CD4-positive, alpha-beta memory T cell (primary cell): ENCODE measurements at regions of chr11 and their contacts with region 1.

Region 1: GRCh38 chr11:95835768-95836488 is 45.6 kb downstream of the CEP57 start:
- DNase-seq: peak; percentile 55 to 64 (median 55)
- H3K4me3 ChIP-seq: no peak overlapping the region
- H3K4me3 Mint-ChIP-seq: no peak overlapping the region
- H3K27ac ChIP-seq: no peak overlapping the region
- H3K27ac Mint-ChIP-seq: peak overlapping the region in 4 of 7 donors; percentile 1 to 75 (median 51)
- H3K4me1 ChIP-seq: no peaks in the 10 kb centered on the region
- H3K4me1 Mint-ChIP-seq: peaks cover 0 to 3% (median 1%) of the 10 kb centered on the region in 4 donors
- H3K27me3 ChIP-seq: no peaks in the 10 kb centered on the region
- H3K27me3 Mint-ChIP-seq: no peaks in the 10 kb centered on the region

Region 2: DNA sequence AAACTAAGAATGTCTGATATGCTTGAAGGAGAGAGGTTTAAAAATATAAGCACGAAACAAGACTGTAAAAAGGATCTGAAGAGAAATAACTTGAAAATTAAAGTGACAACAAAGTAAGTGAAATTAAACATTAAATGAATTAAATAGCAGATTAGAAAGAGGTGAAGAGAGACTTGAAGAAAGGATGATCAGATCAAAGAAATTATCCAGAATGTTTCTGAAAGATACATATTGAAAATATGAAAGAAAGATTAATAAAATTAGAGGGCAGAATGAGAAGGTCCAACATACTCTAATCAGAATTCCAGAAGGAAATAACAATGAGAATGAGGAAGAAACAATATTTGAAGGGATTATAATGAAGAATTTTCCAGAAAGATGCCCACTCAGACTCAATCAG is 197.4 kb before region 1 on chr11:
- CTCF ChIA-PET with region 1: no interaction called
- POLR2A ChIA-PET with region 1: no interaction called
- intact Hi-C with region 1: no loop called
- DNase-seq: no peak
- H3K4me3 ChIP-seq: no peak overlapping the region
- H3K4me3 Mint-ChIP-seq: no peak overlapping the region
- H3K27ac ChIP-seq: no peak overlapping the region
- H3K27ac Mint-ChIP-seq: no peak overlapping the region
- H3K4me1 ChIP-seq: peaks cover 17% of the 10 kb centered on the region
- H3K4me1 Mint-ChIP-seq: peaks cover 9 to 21% (median 15%) of the 10 kb centered on the region in 4 donors
- H3K27me3 ChIP-seq: no peaks in the 10 kb centered on the region
- H3K27me3 Mint-ChIP-seq: no peaks in the 10 kb centered on the region

Region 3: DNA sequence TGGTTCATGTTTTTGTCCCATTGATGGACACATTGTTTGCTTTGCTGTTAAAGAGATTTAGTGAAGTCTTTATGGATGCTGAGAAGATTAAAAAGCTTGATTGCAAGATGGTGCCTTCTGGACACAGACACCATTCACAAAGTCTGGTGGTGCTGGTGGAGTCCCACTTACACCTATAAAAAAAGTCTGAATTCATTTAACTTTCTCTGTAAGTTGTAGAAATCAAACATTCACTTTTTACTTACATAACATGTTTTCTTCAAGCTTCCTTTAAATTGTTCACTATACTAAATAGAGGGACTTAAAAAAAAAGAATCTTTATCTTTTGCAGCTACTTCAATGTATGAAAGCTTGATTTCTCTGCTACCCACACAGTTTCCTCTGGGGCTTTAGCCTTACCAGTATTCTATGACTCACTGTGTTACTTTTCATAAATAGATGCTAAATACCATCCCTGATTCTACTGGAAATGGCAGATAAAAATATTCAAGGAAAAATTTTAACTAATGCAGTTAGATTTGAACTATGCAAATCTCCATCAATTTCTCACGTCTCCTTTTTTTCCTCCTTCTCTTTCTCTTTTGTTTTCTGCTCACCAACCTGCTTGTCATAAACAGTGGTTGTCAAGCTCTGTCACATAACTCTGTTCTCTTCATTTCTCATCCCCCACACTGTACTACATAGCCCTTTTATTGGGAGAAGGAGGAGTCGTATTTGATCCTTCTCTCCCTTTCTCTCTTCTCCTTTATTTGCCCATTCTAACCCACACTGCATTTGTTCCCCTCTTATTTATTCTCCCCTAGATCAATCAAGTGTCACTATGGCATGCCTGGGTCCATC is 136.1 kb before region 1 on chr11:
- CTCF ChIA-PET with region 1: no interaction called
- POLR2A ChIA-PET with region 1: no interaction called
- intact Hi-C with region 1: no loop called
- DNase-seq: peak; percentile 39 to 52 (median 43)
- H3K4me3 ChIP-seq: peak overlapping the region; percentile 3 to 33
- H3K4me3 Mint-ChIP-seq: peak overlapping the region; percentile 72 to 88 (median 82)
- H3K27ac ChIP-seq: peak overlapping the region; percentile 65
- H3K27ac Mint-ChIP-seq: peak overlapping the region; percentile 90 to 97 (median 96)
- H3K4me1 ChIP-seq: peaks cover 80% of the 10 kb centered on the region
- H3K4me1 Mint-ChIP-seq: peaks cover 38 to 60% (median 54%) of the 10 kb centered on the region in 4 donors
- H3K27me3 ChIP-seq: no peaks in the 10 kb centered on the region
- H3K27me3 Mint-ChIP-seq: no peaks in the 10 kb centered on the region

Region 4: DNA sequence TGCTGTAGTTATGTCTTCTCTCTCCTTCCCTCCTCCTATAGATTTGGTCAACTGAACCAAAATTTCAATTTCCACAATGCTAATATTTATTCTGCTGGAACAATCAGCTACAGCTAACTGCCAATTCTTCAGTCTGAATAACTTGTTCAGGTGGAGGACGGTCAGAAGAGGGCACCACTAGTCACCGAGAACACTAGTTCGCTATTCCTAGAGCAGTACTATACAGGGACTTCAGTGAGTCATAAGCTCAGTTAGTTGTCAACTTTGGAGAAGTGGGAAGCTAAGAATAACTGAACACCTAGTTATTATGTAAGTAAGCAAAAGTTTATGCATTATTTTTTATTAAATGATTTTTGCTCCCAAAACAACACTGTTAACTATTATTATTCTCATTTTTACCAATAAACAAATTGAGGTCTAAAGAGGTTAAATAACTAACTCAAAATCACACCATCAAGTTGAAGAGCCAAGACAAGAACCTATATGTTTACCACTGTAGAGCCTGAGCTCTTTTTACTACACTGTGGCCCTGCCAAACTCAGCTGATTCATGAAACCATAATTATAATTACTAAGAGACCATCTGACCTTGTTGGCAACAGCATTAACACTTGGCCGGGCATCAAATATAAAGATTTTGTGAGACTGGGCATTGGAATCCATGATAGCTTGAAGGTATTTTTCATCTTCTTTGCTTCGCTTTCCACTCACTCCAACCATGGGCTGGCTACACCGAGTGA is 13.3 kb after region 1 on chr11:
- CTCF ChIA-PET with region 1: interaction called, 41 read pairs
- POLR2A ChIA-PET with region 1: interaction called, 4 read pairs
- intact Hi-C with region 1: no loop called
- DNase-seq: peak in 1 of 5 donors; percentile 16
- H3K4me3 ChIP-seq: no peak overlapping the region
- H3K4me3 Mint-ChIP-seq: no peak overlapping the region
- H3K27ac ChIP-seq: no peak overlapping the region
- H3K27ac Mint-ChIP-seq: peak overlapping the region in 1 of 7 donors; percentile 67
- H3K4me1 ChIP-seq: no peaks in the 10 kb centered on the region
- H3K4me1 Mint-ChIP-seq: no peaks in the 10 kb centered on the region
- H3K27me3 ChIP-seq: no peaks in the 10 kb centered on the region
- H3K27me3 Mint-ChIP-seq: no peaks in the 10 kb centered on the region

Region 5: GRCh38 chr11:96242971-96243647 is 407.2 kb after region 1 on chr11:
- CTCF ChIA-PET with region 1: no interaction called
- POLR2A ChIA-PET with region 1: no interaction called
- intact Hi-C with region 1: loop called (anchors 10 kb)
- DNase-seq: peak; percentile 65 to 89 (median 68)
- H3K4me3 ChIP-seq: peak overlapping the region; percentile 33 to 57
- H3K4me3 Mint-ChIP-seq: peak overlapping the region; percentile 85 to 93 (median 90)
- H3K27ac ChIP-seq: peak overlapping the region; percentile 63
- H3K27ac Mint-ChIP-seq: peak overlapping the region; percentile 88 to 97 (median 93)
- H3K4me1 ChIP-seq: peaks cover 47% of the 10 kb centered on the region
- H3K4me1 Mint-ChIP-seq: peaks cover 28 to 57% (median 48%) of the 10 kb centered on the region in 4 donors
- H3K27me3 ChIP-seq: no peaks in the 10 kb centered on the region
- H3K27me3 Mint-ChIP-seq: no peaks in the 10 kb centered on the region